Ovary (tissue), 10 donors: ENCODE measurements at regions of chr7 and their contacts with region 1.

Region 1: DNA sequence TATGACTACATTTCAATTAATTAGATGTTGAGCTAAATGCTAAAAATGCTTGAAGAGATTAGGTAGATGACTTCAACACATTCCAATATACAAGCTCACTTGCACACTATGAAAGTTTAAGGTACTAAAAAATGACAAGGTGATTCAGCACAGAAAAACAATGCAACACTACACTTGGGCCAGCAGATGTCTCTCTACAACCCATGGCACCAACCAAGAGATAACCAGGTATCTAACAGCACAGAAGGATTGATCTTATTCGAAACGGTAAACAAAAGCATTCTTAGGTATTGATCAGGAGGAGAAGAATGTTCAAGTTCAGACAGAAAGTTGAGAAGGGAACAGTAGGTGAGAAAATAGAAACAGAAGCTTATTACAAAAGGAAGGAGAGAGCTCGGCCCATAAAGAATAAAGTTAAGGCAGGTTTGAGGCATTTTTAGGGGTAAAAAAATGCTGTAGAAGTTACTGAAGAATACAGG is 248.2 kb upstream of the KLF14 start:
- DNase-seq: no peak
- H3K4me3 ChIP-seq: no peak overlapping the region
- H3K27ac ChIP-seq: no peak overlapping the region
- H3K4me1 ChIP-seq: peaks cover 16% of the 10 kb centered on the region
- H3K27me3 ChIP-seq: no peaks in the 10 kb centered on the region
- CTCF ChIP-seq: peak in 2 of 3 donors; percentile 46 to 50
- EP300 ChIP-seq: no peak
- POLR2A ChIP-seq: no peak

Region 2: GRCh38 chr7:131007394-131008330 is 25.5 kb after region 1 on chr7:
- intact Hi-C with region 1: loop called in 1 of 4 experiments (anchors 2 kb)
- DNase-seq: peak in 4 of 5 donors; percentile 57 to 64 (median 60)
- H3K4me3 ChIP-seq: no peak overlapping the region
- H3K27ac ChIP-seq: peak overlapping the region; percentile 26 to 35
- H3K4me1 ChIP-seq: peaks cover 19% of the 10 kb centered on the region
- H3K27me3 ChIP-seq: no peaks in the 10 kb centered on the region
- CTCF ChIP-seq: peak in 2 of 3 donors; percentile 44 to 58
- EP300 ChIP-seq: no peak
- POLR2A ChIP-seq: no peak